ENCODE measurements at regions of chr6 and their contacts with region 1.

Region 1: GRCh38 chr6:79949233-79949632 is 1.9 kb upstream of the ELOVL4 start:
- DNase-seq: no peak
- H3K4me3 ChIP-seq: peak overlapping the region in 1 of 4 donors; percentile 7
- H3K27ac ChIP-seq: no peak overlapping the region
- H3K4me1 ChIP-seq: peaks cover 0 to 29% (median 5%) of the 10 kb centered on the region in 3 donors
- H3K27me3 ChIP-seq: peaks cover 0 to 29% (median 0%) of the 10 kb centered on the region in 4 donors
- CTCF ChIP-seq: peak; percentile 34 to 72 (median 56)
- POLR2A ChIP-seq: no peak

Region 2: GRCh38 chr6:80095600-80095999 is 146.4 kb after region 1 on chr6:
- intact Hi-C with region 1: loop called (anchors 5 kb)
- DNase-seq: no peak
- H3K4me3 ChIP-seq: no peak overlapping the region
- H3K27ac ChIP-seq: no peak overlapping the region
- H3K4me1 ChIP-seq: no peaks in the 10 kb centered on the region
- H3K27me3 ChIP-seq: no peaks in the 10 kb centered on the region
- CTCF ChIP-seq: no peak
- POLR2A ChIP-seq: no peak

Region 3: GRCh38 chr6:80182291-80182690 is 233.1 kb after region 1 on chr6:
- intact Hi-C with region 1: no loop called
- DNase-seq: no peak
- H3K4me3 ChIP-seq: no peak overlapping the region
- H3K27ac ChIP-seq: no peak overlapping the region
- H3K4me1 ChIP-seq: peaks cover 0 to 24% (median 9%) of the 10 kb centered on the region in 3 donors
- H3K27me3 ChIP-seq: no peaks in the 10 kb centered on the region
- CTCF ChIP-seq: no peak
- POLR2A ChIP-seq: no peak